ENCODE measurements at regions of chr12 and their contacts with region 1.

Region 1: GRCh38 chr12:121095544-121096198 is 37.0 kb upstream of the P2RX7 start:
- DNase-seq: peak; percentile 72
- ATAC-seq: peak; percentile 96
- H3K4me3 Mint-ChIP-seq: peak overlapping the region; percentile 83
- H3K27ac Mint-ChIP-seq: no peak overlapping the region
- H3K4me1 Mint-ChIP-seq: peaks cover 29% of the 10 kb centered on the region
- H3K27me3 Mint-ChIP-seq: peaks cover 8% of the 10 kb centered on the region
- CTCF ChIP-seq: peak; percentile 39

Region 2: GRCh38 chr12:120640840-120641833 is 454.5 kb before region 1 on chr12:
- CTCF ChIA-PET with region 1: no interaction called
- POLR2A ChIA-PET with region 1: no interaction called
- intact Hi-C with region 1: loop called (anchors 5 kb)
- DNase-seq: peak; percentile 52
- ATAC-seq: peak; percentile 72
- H3K4me3 Mint-ChIP-seq: peak overlapping the region; percentile 75
- H3K27ac Mint-ChIP-seq: peak overlapping the region; percentile 41
- H3K4me1 Mint-ChIP-seq: peaks cover 8% of the 10 kb centered on the region
- H3K27me3 Mint-ChIP-seq: peaks cover 48% of the 10 kb centered on the region
- CTCF ChIP-seq: no peak

Region 3: GRCh38 chr12:120944645-120945231 is 150.9 kb before region 1 on chr12:
- CTCF ChIA-PET with region 1: no interaction called
- POLR2A ChIA-PET with region 1: interaction called, 3 read pairs
- intact Hi-C with region 1: loop called (anchors 1 kb)
- DNase-seq: peak; percentile 36
- ATAC-seq: peak; percentile 47
- H3K4me3 Mint-ChIP-seq: no peak overlapping the region
- H3K27ac Mint-ChIP-seq: no peak overlapping the region
- H3K4me1 Mint-ChIP-seq: no peaks in the 10 kb centered on the region
- H3K27me3 Mint-ChIP-seq: no peaks in the 10 kb centered on the region
- CTCF ChIP-seq: no peak

Region 4: GRCh38 chr12:121005346-121005815 is 90.3 kb before region 1 on chr12:
- CTCF ChIA-PET with region 1: interaction called, 3 read pairs
- POLR2A ChIA-PET with region 1: no interaction called
- intact Hi-C with region 1: loop called (anchors 1 kb)
- DNase-seq: no peak
- ATAC-seq: no peak
- H3K4me3 Mint-ChIP-seq: no peak overlapping the region
- H3K27ac Mint-ChIP-seq: no peak overlapping the region
- H3K4me1 Mint-ChIP-seq: no peaks in the 10 kb centered on the region
- H3K27me3 Mint-ChIP-seq: no peaks in the 10 kb centered on the region
- CTCF ChIP-seq: no peak

Region 5: GRCh38 chr12:121015825-121016766 is 79.6 kb before region 1 on chr12 and contains the start of gene C12orf43:
- CTCF ChIA-PET with region 1: no interaction called
- POLR2A ChIA-PET with region 1: no interaction called
- intact Hi-C with region 1: loop called (anchors 5 kb)
- DNase-seq: peak; percentile 80
- ATAC-seq: peak; percentile 98
- H3K4me3 Mint-ChIP-seq: peak within 1 kb of the TSS; percentile 100
- H3K27ac Mint-ChIP-seq: peak within 1 kb of the TSS; percentile 97
- H3K4me1 Mint-ChIP-seq: peaks cover 16% of the 10 kb centered on the region
- H3K27me3 Mint-ChIP-seq: no peaks in the 10 kb centered on the region
- CTCF ChIP-seq: no peak
- total RNA-seq, gene C12orf43: 23.7 and 24.8 TPM in 2 replicates

Region 6: GRCh38 chr12:121060149-121061001 is 35.3 kb before region 1 on chr12:
- CTCF ChIA-PET with region 1: interaction called, 15 read pairs
- POLR2A ChIA-PET with region 1: interaction called, 4 read pairs
- intact Hi-C with region 1: loop called (anchors 1 kb)
- DNase-seq: peak; percentile 26
- ATAC-seq: peak; percentile 94
- H3K4me3 Mint-ChIP-seq: peak overlapping the region; percentile 83
- H3K27ac Mint-ChIP-seq: peak overlapping the region; percentile 82
- H3K4me1 Mint-ChIP-seq: peaks cover 11% of the 10 kb centered on the region
- H3K27me3 Mint-ChIP-seq: no peaks in the 10 kb centered on the region
- CTCF ChIP-seq: peak; percentile 44

Region 7: DNA sequence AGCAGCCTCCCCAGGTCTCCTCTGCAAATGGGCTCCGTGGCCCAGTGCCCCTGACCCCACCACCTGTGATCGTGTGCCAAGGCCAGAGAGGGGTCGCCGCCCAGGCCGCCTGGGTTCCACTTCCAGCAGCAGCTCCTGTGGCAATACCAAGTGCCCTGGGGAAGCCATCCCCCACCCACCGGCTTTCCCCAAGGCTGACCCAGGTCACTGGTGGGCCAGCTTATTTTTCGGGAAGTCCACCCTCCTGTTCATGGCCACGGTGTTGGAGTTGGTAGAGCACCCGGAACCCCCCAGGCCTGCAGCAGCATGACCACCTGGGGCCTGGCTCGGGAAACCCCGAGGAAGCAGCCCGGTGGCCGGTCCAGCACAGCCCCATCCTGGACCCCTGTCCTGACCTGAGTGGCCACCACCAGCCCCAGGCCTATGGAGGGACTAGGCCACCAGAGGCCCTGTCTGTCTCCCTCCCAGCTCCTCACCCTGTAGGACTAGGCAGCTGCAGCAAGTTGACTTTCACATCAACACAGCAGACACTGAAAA is 15.9 kb before region 1 on chr12:
- CTCF ChIA-PET with region 1: no interaction called
- POLR2A ChIA-PET with region 1: no interaction called
- intact Hi-C with region 1: no loop called
- DNase-seq: no peak
- ATAC-seq: no peak
- H3K4me3 Mint-ChIP-seq: no peak overlapping the region
- H3K27ac Mint-ChIP-seq: no peak overlapping the region
- H3K4me1 Mint-ChIP-seq: no peaks in the 10 kb centered on the region
- H3K27me3 Mint-ChIP-seq: peaks cover 3% of the 10 kb centered on the region
- CTCF ChIP-seq: no peak

Region 8: DNA sequence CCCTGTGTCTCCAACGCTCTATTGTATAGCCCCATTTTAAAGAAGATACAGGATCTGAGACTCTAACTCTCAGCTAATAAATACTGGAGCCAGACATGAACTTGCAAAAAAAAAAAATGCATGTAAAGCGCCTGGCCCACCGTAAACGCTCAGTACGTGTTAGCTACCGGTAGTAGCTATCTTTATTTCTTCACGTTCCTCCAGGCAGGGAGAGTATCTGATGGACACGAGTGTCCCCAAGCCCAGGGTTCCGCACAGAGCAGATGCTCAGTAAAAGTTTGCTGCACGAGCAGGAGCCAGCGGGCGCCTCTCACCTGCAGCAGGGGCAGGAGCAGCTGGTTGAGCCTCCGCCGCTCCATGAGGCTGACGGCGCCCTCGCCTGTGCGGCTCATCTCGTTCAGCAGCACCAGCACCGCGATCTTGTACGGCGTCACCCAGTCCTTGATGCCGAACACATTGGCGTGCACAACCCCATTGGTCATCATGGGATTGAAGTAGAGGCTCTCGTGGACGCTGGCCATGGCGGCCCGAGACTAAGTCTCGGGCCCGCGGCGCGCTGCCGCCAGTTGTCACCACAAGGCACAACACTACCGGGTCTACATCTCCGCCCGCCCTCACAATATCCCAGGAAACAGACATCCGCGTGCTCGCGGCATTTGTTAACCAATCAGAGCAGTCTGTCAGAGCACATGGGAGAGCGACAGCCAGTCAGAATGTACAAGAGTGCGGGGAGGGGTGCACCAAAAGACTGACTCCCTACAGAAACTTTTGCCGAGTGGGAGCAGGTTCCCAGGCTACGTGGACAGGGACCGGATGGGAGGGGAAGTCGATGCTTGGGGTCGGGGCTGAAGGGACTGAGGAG is 256.4 kb after region 1 on chr12 and contains the start of gene ANAPC5:
- CTCF ChIA-PET with region 1: no interaction called
- POLR2A ChIA-PET with region 1: no interaction called
- intact Hi-C with region 1: no loop called
- DNase-seq: peak; percentile 73
- ATAC-seq: peak; percentile 99
- H3K4me3 Mint-ChIP-seq: peak within 1 kb of the TSS; percentile 94
- H3K27ac Mint-ChIP-seq: peak within 1 kb of the TSS; percentile 91
- H3K4me1 Mint-ChIP-seq: peaks cover 28% of the 10 kb centered on the region
- H3K27me3 Mint-ChIP-seq: no peaks in the 10 kb centered on the region
- CTCF ChIP-seq: no peak
- total RNA-seq, gene ANAPC5: 116 and 143 TPM in 2 replicates

Region 9: GRCh38 chr12:121376754-121377697 is 281.4 kb after region 1 on chr12:
- CTCF ChIA-PET with region 1: no interaction called
- POLR2A ChIA-PET with region 1: no interaction called
- intact Hi-C with region 1: no loop called
- DNase-seq: no peak
- ATAC-seq: no peak
- H3K4me3 Mint-ChIP-seq: no peak overlapping the region
- H3K27ac Mint-ChIP-seq: no peak overlapping the region
- H3K4me1 Mint-ChIP-seq: no peaks in the 10 kb centered on the region
- H3K27me3 Mint-ChIP-seq: peaks cover 1% of the 10 kb centered on the region
- CTCF ChIP-seq: no peak

Measured in activated B cell treated with CpG ODN at 0.5 μM for 24 hours (primary cell).